Endothelial cell of umbilical vein (primary cell): ENCODE measurements at regions of chr15 and their contacts with region 1.

Region 1: GRCh38 chr15:48975472-48976419 is 12.0 kb upstream of the SHC4 start:
- DNase-seq: peak; percentile 79
- H3K4me3 ChIP-seq: peak overlapping the region; percentile 34 to 61 (median 58)
- H3K27ac ChIP-seq: no peak overlapping the region
- H3K4me1 ChIP-seq: peaks cover 8% of the 10 kb centered on the region
- H3K27me3 ChIP-seq: no peaks in the 10 kb centered on the region
- CTCF ChIP-seq: peak; percentile 81 to 98
- POLR2A ChIP-seq: no peak

Region 2: DNA sequence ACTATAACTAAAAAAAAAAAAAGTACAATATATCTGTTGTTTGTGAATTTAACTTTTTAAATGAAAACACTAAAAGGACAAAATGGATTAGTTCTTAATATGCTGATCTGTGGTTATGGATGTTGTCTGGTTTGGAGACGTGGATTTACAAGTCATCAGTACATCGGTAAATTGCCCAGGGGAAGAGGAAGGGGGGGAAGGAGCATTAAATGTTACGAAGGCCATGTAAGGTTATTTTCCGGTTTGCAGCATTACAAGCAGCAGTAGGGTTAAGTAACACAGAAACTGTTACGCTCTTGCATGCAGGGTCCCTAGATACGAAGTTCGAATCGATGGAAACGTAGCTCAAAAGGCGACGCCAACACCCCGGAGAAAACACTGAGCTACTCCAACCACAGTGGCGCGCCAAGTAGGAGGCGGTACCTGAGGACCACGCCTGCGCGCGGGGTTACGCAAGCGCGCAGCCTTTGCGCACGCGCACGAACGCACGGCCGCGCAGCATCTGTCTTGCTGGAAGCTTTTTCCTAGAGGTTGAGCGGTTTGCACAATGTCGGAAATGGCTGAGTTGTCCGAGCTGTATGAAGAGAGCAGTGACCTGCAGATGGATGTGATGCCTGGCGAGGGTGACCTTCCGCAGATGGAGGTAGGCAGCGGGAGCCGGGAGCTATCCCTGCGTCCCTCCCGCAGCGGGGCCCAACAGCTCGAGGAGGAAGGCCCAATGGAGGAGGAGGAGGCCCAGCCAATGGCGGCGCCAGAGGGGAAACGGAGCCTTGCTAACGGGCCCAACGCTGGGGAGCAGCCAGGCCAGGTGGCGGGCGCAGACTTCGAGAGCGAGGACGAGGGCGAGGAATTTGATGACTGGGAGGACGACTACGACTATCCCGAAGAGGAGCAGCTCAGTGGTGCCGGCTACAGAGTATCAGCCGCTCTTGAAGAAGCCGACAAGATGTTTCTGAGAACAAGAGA is 97.8 kb before region 1 on chr15 and contains the start of gene EID1:
- CTCF ChIA-PET with region 1: interaction called, 26 read pairs
- POLR2A ChIA-PET with region 1: no interaction called
- dilution Hi-C with region 1: no loop called
- intact Hi-C with region 1: loop called (anchors 1 kb)
- DNase-seq: peak; percentile 97
- H3K4me3 ChIP-seq: peak within 1 kb of the TSS; percentile 25 to 86 (median 67)
- H3K27ac ChIP-seq: peak within 1 kb of the TSS; percentile 29
- H3K4me1 ChIP-seq: peaks cover 13% of the 10 kb centered on the region
- H3K27me3 ChIP-seq: peaks cover under 1 to 7% of the 10 kb centered on the region in 2 experiments
- CTCF ChIP-seq: no peak
- POLR2A ChIP-seq: peak; percentile 86
- total RNA-seq, gene EID1: 146 and 153 TPM in 2 replicates

Region 3: GRCh38 chr15:48940448-48940893 is 35.3 kb before region 1 on chr15:
- CTCF ChIA-PET with region 1: interaction called, 13 read pairs
- POLR2A ChIA-PET with region 1: no interaction called
- dilution Hi-C with region 1: no loop called
- intact Hi-C with region 1: no loop called
- DNase-seq: no peak
- H3K4me3 ChIP-seq: no peak overlapping the region
- H3K27ac ChIP-seq: no peak overlapping the region
- H3K4me1 ChIP-seq: no peaks in the 10 kb centered on the region
- H3K27me3 ChIP-seq: peaks cover 0 to 3% of the 10 kb centered on the region in 2 experiments
- CTCF ChIP-seq: no peak
- POLR2A ChIP-seq: no peak

Region 4: GRCh38 chr15:48946088-48946839 is 29.5 kb before region 1 on chr15:
- CTCF ChIA-PET with region 1: interaction called, 11 read pairs
- POLR2A ChIA-PET with region 1: no interaction called
- dilution Hi-C with region 1: no loop called
- intact Hi-C with region 1: no loop called
- DNase-seq: peak; percentile 8
- H3K4me3 ChIP-seq: no peak overlapping the region
- H3K27ac ChIP-seq: no peak overlapping the region
- H3K4me1 ChIP-seq: peaks cover 7% of the 10 kb centered on the region
- H3K27me3 ChIP-seq: peaks cover 2% of the 10 kb centered on the region in 2 experiments
- CTCF ChIP-seq: no peak
- POLR2A ChIP-seq: no peak

Region 5: GRCh38 chr15:48963524-48964113 is 12.1 kb before region 1 on chr15 and contains the start of gene SHC4:
- CTCF ChIA-PET with region 1: interaction called, 86 read pairs
- POLR2A ChIA-PET with region 1: interaction called, 9 read pairs
- dilution Hi-C with region 1: no loop called
- intact Hi-C with region 1: loop called (anchors 1 kb)
- DNase-seq: peak; percentile 89
- H3K4me3 ChIP-seq: peak within 1 kb of the TSS; percentile 17 to 76 (median 40)
- H3K27ac ChIP-seq: no peak within 1 kb of the TSS
- H3K4me1 ChIP-seq: peaks cover 8% of the 10 kb centered on the region
- H3K27me3 ChIP-seq: peaks cover 13 to 21% of the 10 kb centered on the region in 2 experiments
- CTCF ChIP-seq: no peak
- POLR2A ChIP-seq: no peak
- total RNA-seq, gene SHC4: 0.20 TPM in 1 of 2 replicates, not detected in the other

Region 6: GRCh38 chr15:48993380-48993779 is 17.6 kb after region 1 on chr15:
- CTCF ChIA-PET with region 1: interaction called, 12 read pairs
- POLR2A ChIA-PET with region 1: no interaction called
- dilution Hi-C with region 1: no loop called
- intact Hi-C with region 1: no loop called
- DNase-seq: no peak
- H3K4me3 ChIP-seq: no peak overlapping the region
- H3K27ac ChIP-seq: no peak overlapping the region
- H3K4me1 ChIP-seq: no peaks in the 10 kb centered on the region
- H3K27me3 ChIP-seq: no peaks in the 10 kb centered on the region
- CTCF ChIP-seq: no peak
- POLR2A ChIP-seq: no peak

Region 7: DNA sequence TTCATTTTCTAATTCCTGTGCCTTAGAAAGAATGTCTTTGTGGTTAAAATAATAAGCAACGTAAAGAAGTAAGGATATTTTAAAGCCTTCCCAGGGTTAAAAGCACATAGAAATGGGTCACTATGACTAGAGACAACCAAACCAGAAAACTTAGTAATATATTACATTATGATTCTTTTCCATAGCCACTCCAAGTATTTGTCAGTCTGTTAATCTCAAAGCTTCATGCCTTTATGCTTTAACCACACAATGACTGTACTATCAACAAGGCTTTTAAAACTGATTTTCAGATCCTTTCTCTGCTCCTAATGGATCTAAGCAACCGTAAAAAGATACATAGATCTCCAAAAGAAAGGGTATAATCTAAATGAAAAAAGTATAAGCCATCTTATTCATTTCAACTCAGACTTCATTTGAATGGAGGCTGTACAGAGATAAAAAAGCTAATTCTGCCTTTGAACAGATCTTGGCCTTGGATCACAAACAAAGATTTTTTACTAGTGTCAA is 56.1 kb after region 1 on chr15:
- CTCF ChIA-PET with region 1: no interaction called
- POLR2A ChIA-PET with region 1: no interaction called
- dilution Hi-C with region 1: no loop called
- intact Hi-C with region 1: no loop called
- DNase-seq: no peak
- H3K4me3 ChIP-seq: no peak overlapping the region
- H3K27ac ChIP-seq: no peak overlapping the region
- H3K4me1 ChIP-seq: no peaks in the 10 kb centered on the region
- H3K27me3 ChIP-seq: no peaks in the 10 kb centered on the region
- CTCF ChIP-seq: no peak
- POLR2A ChIP-seq: no peak

Region 8: GRCh38 chr15:49199666-49200065 is 223.9 kb after region 1 on chr15:
- CTCF ChIA-PET with region 1: no interaction called
- POLR2A ChIA-PET with region 1: no interaction called
- dilution Hi-C with region 1: no loop called
- intact Hi-C with region 1: no loop called
- DNase-seq: no peak
- H3K4me3 ChIP-seq: no peak overlapping the region
- H3K27ac ChIP-seq: no peak overlapping the region
- H3K4me1 ChIP-seq: no peaks in the 10 kb centered on the region
- H3K27me3 ChIP-seq: no peaks in the 10 kb centered on the region
- CTCF ChIP-seq: no peak
- POLR2A ChIP-seq: no peak